ENCODE measurements at regions of chr13 and their contacts with region 1.

Region 1: DNA sequence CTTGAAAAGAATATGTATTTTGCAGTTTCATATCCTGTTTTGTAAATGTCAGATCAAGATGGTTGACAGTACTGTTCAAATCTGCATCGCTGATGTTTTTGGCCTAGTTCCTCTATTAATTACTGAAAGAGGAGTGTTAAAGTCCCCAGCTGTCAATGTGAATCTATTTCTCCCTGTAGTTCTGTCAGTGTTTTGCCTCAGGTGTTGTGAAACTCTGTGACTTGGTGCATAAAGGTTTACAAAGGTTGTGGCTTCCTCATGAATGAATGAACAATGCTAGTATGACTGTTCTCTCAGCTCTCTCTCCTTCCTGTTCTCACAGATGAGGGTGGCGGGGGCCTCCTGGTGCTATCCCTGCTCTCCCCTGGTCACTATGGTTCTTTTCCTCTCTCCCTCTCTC is 142.4 kb downstream of the MYCBP2 start:
- DNase-seq: peak; percentile 79
- ATAC-seq: peak; percentile 94
- H3K4me3 ChIP-seq: no peak overlapping the region
- H3K4me3 Mint-ChIP-seq: peak overlapping the region; percentile 48
- H3K27ac ChIP-seq: peak overlapping the region; percentile 47 to 78
- H3K27ac Mint-ChIP-seq: peak overlapping the region; percentile 90
- H3K4me1 ChIP-seq: peaks cover 12 to 15% of the 10 kb centered on the region in 2 donors
- H3K4me1 Mint-ChIP-seq: peaks cover 23% of the 10 kb centered on the region
- H3K27me3 ChIP-seq: no peaks in the 10 kb centered on the region
- H3K27me3 Mint-ChIP-seq: no peaks in the 10 kb centered on the region
- CTCF ChIP-seq: no peak

Region 2: DNA sequence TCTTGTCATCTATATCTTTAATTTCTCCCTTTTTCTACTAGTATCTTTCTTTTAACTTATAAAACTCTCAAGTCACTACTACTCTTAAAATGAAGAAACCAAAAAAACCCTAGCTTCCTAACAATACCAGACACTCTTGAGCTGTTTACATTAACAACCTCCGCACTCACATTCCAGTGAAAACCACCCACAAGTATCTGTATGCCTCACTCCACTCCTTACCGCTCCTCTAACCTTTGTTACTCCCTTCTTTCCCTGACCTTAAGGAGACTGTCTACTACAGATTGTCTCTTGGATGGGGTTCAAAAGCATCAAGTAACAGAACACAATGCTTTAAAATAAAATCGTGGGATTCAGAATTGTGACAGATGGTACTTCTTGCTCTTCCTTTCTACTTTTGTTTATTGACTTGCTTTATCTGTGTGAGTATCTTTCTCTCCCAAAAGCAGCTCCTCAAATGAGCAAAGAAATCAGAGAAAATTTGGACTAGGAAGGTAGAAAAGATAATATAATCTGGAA is 47.5 kb before region 1 on chr13:
- CTCF ChIA-PET with region 1: interaction called, 4 read pairs
- POLR2A ChIA-PET with region 1: no interaction called
- intact Hi-C with region 1: loop called (anchors 10 kb)
- DNase-seq: no peak
- ATAC-seq: no peak
- H3K4me3 ChIP-seq: no peak overlapping the region
- H3K4me3 Mint-ChIP-seq: no peak overlapping the region
- H3K27ac ChIP-seq: no peak overlapping the region
- H3K27ac Mint-ChIP-seq: no peak overlapping the region
- H3K4me1 ChIP-seq: no peaks in the 10 kb centered on the region
- H3K4me1 Mint-ChIP-seq: no peaks in the 10 kb centered on the region
- H3K27me3 ChIP-seq: no peaks in the 10 kb centered on the region
- H3K27me3 Mint-ChIP-seq: no peaks in the 10 kb centered on the region
- CTCF ChIP-seq: no peak

Region 3: GRCh38 chr13:77267362-77267761 is 82.9 kb after region 1 on chr13:
- CTCF ChIA-PET with region 1: interaction called, 3 read pairs
- POLR2A ChIA-PET with region 1: no interaction called
- intact Hi-C with region 1: loop called (anchors 10 kb)
- DNase-seq: no peak
- ATAC-seq: no peak
- H3K4me3 ChIP-seq: no peak overlapping the region
- H3K4me3 Mint-ChIP-seq: no peak overlapping the region
- H3K27ac ChIP-seq: no peak overlapping the region
- H3K27ac Mint-ChIP-seq: no peak overlapping the region
- H3K4me1 ChIP-seq: no peaks in the 10 kb centered on the region
- H3K4me1 Mint-ChIP-seq: no peaks in the 10 kb centered on the region
- H3K27me3 ChIP-seq: no peaks in the 10 kb centered on the region
- H3K27me3 Mint-ChIP-seq: no peaks in the 10 kb centered on the region
- CTCF ChIP-seq: no peak